Activated B cell treated with CpG ODN at 0.5 μM for 24 hours (primary cell): ENCODE measurements at regions of chr1 and their contacts with region 1.

Region 1: DNA sequence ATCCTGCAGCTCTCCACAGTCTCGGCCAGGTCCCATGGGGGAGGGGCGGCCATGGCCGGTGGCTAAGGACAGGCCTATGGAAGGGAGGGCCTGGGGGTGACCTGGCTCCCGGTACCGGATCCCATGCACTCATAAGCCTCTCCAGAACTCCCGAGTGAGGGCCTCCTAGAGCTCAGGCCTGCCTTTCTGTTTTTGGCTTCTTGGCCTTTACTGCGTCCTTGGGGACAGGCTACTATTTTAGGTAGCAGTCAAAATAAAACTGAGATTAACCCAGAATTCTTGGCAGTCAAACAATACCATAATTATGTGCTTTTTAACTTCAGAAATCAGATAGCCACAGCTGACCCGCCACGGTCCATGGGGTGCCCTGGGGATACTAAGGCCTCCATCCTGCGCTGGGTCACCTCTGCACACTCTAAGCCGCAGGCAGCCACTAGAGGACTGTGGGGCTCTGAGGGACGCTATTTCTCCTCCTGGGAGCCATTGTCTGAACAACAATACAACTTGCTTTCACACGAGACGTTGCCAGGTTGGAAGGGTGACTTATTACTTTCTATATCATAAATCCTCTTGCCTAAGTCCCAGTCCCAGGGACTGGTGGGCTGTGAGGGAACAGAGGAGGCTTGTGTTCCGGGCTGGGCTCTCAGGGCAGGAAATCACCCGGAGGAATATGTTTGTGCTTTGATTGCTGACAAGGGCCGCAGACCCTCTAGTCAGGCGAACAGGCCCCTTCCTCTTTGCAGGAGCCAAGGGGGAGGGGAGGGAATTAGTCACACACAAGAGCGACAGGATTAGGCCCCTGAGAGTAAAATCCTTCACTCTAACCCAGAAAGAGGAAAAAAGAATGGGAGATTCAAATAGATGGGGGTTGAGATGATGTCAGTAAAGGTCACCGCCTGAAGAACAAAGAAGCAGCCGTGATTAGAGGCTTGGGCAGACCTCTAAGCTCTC is 40.7 kb upstream of the BCAR3 start:
- DNase-seq: no peak
- ATAC-seq: no peak
- H3K4me3 Mint-ChIP-seq: no peak overlapping the region
- H3K27ac Mint-ChIP-seq: no peak overlapping the region
- H3K4me1 Mint-ChIP-seq: no peaks in the 10 kb centered on the region
- H3K27me3 Mint-ChIP-seq: no peaks in the 10 kb centered on the region
- CTCF ChIP-seq: no peak

Region 2: DNA sequence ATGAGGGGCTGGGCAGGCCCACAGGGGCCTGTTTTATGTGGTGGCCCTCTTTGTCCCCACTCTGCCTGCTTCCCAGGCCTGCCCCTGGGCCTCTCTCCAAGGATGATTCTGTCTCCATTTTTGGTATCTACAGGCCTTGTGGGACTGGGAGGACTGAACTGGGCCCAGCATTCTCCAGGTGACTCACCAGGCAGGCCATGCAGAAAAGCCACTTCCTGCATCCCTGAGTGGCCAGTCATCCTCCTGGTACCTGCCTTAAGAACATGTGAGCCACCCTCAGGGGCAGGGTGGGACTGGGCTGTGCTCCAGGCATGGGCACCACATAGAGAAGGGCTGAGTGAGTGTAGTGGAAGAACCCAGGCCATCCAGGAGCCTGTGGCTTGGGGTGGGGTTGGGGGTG is 20.7 kb before region 1 on chr1:
- CTCF ChIA-PET with region 1: interaction called, 3 read pairs
- POLR2A ChIA-PET with region 1: no interaction called
- intact Hi-C with region 1: loop called (anchors 1 kb)
- DNase-seq: no peak
- ATAC-seq: peak; percentile 47
- H3K4me3 Mint-ChIP-seq: no peak overlapping the region
- H3K27ac Mint-ChIP-seq: peak overlapping the region; percentile 46
- H3K4me1 Mint-ChIP-seq: peaks cover 69% of the 10 kb centered on the region
- H3K27me3 Mint-ChIP-seq: no peaks in the 10 kb centered on the region
- CTCF ChIP-seq: no peak